Activated T-helper 1 cell treated with anti-CD3 and anti-CD28 coated beads, Interleukin-12 subunit alpha, Interleukin-12 subunit beta, Interleukin-2, Interleukin-4 antibody, amounts not matched to agents 30 ng/mL and 10 ng/mL and 1 ng/mL, durations not matched to agents 14 hours and 24 hours and 36 hours (primary cell): ENCODE measurements at regions of chr10 and their contacts with region 1.

Region 1: DNA sequence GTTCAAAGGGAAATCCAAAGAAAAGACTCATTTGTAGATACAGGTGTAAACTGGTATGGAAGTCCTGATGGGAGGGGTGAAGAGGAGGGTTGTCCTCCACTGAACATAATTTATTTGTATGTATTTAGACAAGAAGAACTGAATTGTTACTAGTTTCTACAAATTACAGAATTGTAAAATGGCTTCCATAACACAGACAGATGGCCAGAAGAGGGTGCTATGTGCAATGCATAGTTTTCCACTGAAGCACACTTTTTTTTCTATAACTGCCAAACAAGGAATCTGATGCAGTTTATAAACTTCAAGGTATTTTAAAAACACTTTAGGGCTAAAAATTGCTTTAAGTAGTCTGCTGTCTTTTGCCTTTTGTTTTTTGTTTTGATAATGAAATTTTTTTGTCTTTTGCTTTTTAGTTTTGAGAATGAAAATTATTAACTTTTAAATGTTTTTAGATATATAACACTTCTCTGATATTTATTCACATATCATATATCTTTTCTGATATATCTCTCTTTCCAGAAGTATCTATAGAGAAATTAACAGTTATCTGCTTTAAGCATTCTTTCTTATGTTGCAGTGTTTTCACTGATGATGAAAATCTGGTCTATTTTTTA is 58.5 kb downstream of the PHYHIPL start:
- DNase-seq: no peak
- H3K4me3 Mint-ChIP-seq: no peak overlapping the region
- H3K27ac Mint-ChIP-seq: no peak overlapping the region
- H3K4me1 Mint-ChIP-seq: no peaks in the 10 kb centered on the region
- H3K27me3 Mint-ChIP-seq: peaks cover 2% of the 10 kb centered on the region

Region 2: DNA sequence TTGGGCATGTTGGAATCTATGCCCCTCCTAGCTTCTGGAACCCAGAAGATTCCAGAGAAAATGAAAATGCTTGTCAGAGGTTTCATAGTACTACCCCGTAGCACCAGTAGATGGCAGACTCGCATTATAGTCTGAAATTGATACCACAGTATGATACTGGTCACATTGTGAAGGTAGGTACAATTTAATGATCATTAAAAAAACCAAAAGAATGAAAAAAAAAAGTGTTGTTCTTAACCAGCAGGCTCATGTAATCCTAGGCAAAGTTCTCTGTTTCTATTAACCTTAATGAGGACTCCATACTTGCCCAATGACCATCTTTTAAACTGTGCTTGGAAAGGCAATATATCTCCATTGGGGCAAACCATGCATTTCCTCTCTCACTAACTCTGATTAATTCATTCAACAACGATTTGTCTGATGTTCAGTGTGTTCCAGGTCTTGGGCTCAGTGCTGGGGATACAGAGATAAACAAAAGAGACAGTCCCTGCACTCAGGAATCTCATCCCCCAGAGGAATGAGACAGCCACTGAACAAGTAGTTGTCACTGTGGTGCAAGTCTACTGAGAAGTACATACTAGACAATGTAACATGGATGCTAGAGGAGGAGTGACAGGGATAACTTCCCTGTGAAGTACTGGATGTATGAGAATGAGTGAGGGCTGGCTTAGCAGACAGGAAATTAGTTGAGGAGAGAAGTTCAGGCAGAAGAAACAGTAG is 282.0 kb before region 1 on chr10:
- intact Hi-C with region 1: loop called (anchors 10 kb)
- DNase-seq: no peak
- H3K4me3 Mint-ChIP-seq: no peak overlapping the region
- H3K27ac Mint-ChIP-seq: no peak overlapping the region
- H3K4me1 Mint-ChIP-seq: no peaks in the 10 kb centered on the region
- H3K27me3 Mint-ChIP-seq: peaks cover 2% of the 10 kb centered on the region

Region 3: DNA sequence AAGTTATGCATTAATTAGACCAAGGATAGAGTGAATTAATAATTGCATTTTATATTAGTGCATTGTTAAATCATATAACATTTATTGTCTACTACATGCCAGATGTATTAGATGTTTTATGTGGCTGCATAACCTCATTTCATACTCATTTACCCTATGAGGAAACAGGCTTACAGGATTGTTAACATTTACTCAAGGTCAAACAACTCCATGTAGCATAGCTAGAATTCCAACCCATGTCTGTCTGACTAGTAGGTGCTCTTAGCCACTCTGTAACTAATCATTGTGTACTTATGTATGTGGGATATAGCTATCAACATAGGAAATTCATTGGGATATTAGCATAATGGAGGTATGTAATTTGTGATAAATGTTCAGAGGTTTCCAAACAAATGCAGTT is 12.1 kb before region 1 on chr10:
- intact Hi-C with region 1: no loop called
- DNase-seq: no peak
- H3K4me3 Mint-ChIP-seq: no peak overlapping the region
- H3K27ac Mint-ChIP-seq: no peak overlapping the region
- H3K4me1 Mint-ChIP-seq: no peaks in the 10 kb centered on the region
- H3K27me3 Mint-ChIP-seq: no peaks in the 10 kb centered on the region

Region 4: DNA sequence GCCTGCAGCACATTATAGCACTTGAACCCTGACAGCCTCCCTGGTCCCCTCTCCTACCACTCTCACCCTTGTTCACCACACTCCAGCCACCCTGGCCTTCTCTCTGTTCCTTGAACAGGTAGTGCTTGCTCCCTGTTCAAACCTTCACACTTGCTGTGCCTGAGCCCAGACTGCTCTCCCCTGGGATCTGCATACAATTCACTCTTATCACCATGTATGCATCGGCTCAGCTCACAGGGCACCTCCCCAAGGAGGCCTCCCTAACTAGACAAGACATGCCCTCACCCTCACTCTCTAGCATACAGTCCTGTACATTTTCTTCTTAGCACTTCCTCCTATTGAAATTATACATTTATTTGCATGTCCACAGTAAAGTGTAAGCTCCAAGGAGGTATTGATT is 68.1 kb after region 1 on chr10:
- intact Hi-C with region 1: no loop called
- DNase-seq: no peak
- H3K4me3 Mint-ChIP-seq: no peak overlapping the region
- H3K27ac Mint-ChIP-seq: no peak overlapping the region
- H3K4me1 Mint-ChIP-seq: no peaks in the 10 kb centered on the region
- H3K27me3 Mint-ChIP-seq: no peaks in the 10 kb centered on the region

Region 5: GRCh38 chr10:59333701-59334100 is 98.8 kb after region 1 on chr10:
- intact Hi-C with region 1: no loop called
- DNase-seq: no peak
- H3K4me3 Mint-ChIP-seq: no peak overlapping the region
- H3K27ac Mint-ChIP-seq: no peak overlapping the region
- H3K4me1 Mint-ChIP-seq: no peaks in the 10 kb centered on the region
- H3K27me3 Mint-ChIP-seq: no peaks in the 10 kb centered on the region